HepG2 (cell line): ENCODE measurements at regions of chr11 and their contacts with region 1.

Region 1: DNA sequence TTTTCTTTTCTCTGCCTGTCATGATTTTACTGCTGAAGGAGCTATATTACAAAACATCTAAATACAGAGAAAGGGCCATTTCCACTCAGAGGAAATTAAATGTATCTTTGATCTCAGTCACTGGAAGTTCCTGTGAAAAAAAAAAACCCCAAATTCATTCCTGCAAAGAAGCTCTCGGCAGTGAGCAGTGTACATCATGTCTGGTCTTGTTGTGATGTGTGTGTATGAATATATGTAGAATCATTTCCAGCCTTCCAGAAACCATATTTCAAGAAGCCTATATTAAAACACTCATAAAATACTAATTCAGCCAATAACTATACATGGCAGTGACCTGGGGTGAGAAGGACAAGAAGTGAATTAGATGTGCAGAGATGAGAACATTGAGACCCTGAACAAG is 393.2 kb upstream of the TENM4 start:
- DNase-seq: no peak
- ATAC-seq: no peak
- H3K4me3 ChIP-seq: no peak overlapping the region
- H3K27ac ChIP-seq: no peak overlapping the region
- H3K4me1 ChIP-seq: no peaks in the 10 kb centered on the region
- H3K27me3 ChIP-seq: no peaks in the 10 kb centered on the region
- CTCF ChIP-seq: no peak
- EP300 ChIP-seq: no peak
- POLR2A ChIP-seq: no peak
- RAD21 ChIP-seq: no peak

Region 2: DNA sequence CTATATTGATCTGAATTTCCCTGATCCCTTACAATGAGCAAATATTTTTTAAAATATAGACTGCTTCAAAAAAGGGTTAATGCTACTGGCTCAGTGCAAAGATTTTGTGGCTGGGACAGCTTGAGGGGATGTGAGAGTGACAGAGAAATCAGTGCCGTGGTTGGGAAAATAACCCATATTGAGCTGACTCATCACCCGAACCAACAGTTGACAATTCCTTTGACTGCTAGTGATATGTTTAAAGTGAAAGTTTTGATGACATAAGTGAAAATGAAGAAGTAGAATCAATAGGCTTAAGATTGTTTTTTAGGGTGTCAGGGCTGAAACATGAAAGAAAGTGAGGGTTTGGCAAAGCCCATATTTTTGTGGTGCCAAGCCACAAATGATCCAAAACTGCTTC is 136.1 kb before region 1 on chr11:
- CTCF ChIA-PET with region 1: no interaction called
- POLR2A ChIA-PET with region 1: no interaction called
- in situ Hi-C with region 1: no loop called
- intact Hi-C with region 1: no loop called
- DNase-seq: no peak
- ATAC-seq: no peak
- H3K4me3 ChIP-seq: no peak overlapping the region
- H3K27ac ChIP-seq: no peak overlapping the region
- H3K4me1 ChIP-seq: no peaks in the 10 kb centered on the region
- H3K27me3 ChIP-seq: no peaks in the 10 kb centered on the region
- CTCF ChIP-seq: no peak
- EP300 ChIP-seq: no peak
- POLR2A ChIP-seq: no peak
- RAD21 ChIP-seq: no peak

Region 3: GRCh38 chr11:79768343-79768742 is 65.7 kb before region 1 on chr11:
- CTCF ChIA-PET with region 1: no interaction called
- POLR2A ChIA-PET with region 1: no interaction called
- in situ Hi-C with region 1: no loop called
- intact Hi-C with region 1: loop called (anchors 10 kb)
- DNase-seq: no peak
- ATAC-seq: no peak
- H3K4me3 ChIP-seq: no peak overlapping the region
- H3K27ac ChIP-seq: no peak overlapping the region
- H3K4me1 ChIP-seq: no peaks in the 10 kb centered on the region
- H3K27me3 ChIP-seq: no peaks in the 10 kb centered on the region
- CTCF ChIP-seq: no peak
- EP300 ChIP-seq: no peak
- POLR2A ChIP-seq: no peak
- RAD21 ChIP-seq: no peak